CD14-positive monocyte (primary cell): ENCODE measurements at regions of chr1 and their contacts with region 1.

Region 1: DNA sequence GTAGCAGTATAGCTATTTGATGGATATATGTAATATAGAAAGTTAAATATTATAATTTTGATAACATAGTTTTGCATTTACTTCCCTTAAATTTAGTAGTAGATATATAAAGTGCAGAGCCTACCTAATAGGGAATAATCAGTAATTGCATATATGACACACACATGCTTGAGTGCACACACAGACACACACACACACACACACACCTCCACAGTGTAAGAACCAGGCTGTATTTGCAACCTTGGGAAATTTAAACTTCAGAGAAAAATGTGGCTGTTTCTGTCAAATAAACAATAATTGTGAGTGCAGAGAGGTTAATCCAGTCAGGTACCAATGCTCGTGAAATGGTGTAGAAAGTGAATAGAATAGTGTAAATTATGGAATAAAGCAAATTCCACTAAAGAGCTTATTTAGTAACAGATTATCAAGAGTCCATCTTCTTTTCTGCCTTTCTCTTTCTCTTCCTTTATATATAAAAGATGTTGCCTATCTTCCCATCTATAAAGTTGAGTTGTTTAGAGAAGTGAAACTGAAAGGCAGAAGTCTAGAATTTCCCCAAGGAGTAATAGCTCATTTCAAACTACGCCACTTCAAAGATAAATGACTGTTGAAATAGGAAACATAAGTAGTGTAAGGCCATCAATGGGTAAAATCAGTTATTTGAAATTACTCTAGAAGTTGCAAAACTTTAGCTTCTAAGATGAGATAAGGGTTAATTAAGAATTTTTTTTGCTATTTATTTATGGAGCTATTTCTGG is 273.7 kb downstream of the SRGAP2C start:
- DNase-seq: peak; percentile 77 to 92 (median 91)
- H3K4me3 ChIP-seq: peak overlapping the region in 1 of 3 experiments; percentile 24
- H3K4me3 Mint-ChIP-seq: no peak overlapping the region
- H3K27ac ChIP-seq: peak overlapping the region in 1 of 2 donors; percentile 47
- H3K27ac Mint-ChIP-seq: peak overlapping the region; percentile 50 to 88 (median 72)
- H3K4me1 ChIP-seq: peaks cover 5 to 15% of the 10 kb centered on the region in 2 donors
- H3K4me1 Mint-ChIP-seq: peaks cover 10% of the 10 kb centered on the region
- H3K27me3 ChIP-seq: no peaks in the 10 kb centered on the region
- H3K27me3 Mint-ChIP-seq: peaks cover 0 to 3% (median 2%) of the 10 kb centered on the region in 3 donors
- CTCF ChIP-seq: no peak

Region 2: GRCh38 chr1:121519042-121519755 is 60.7 kb after region 1 on chr1:
- intact Hi-C with region 1: loop called (anchors 5 to 10 kb)
- DNase-seq: peak; percentile 33 to 50 (median 45)
- H3K4me3 ChIP-seq: peak overlapping the region; percentile 44 to 84 (median 60)
- H3K4me3 Mint-ChIP-seq: peak overlapping the region; percentile 89 to 93
- H3K27ac ChIP-seq: peak overlapping the region in 1 of 2 donors; percentile 68
- H3K27ac Mint-ChIP-seq: peak overlapping the region in 5 of 7 donors; percentile 8 to 88 (median 45)
- H3K4me1 ChIP-seq: peaks cover 39 to 48% of the 10 kb centered on the region in 2 donors
- H3K4me1 Mint-ChIP-seq: peaks cover 47% of the 10 kb centered on the region
- H3K27me3 ChIP-seq: no peaks in the 10 kb centered on the region
- H3K27me3 Mint-ChIP-seq: peaks cover 2 to 3% (median 2%) of the 10 kb centered on the region in 3 donors
- CTCF ChIP-seq: no peak